Ovary (tissue), 10 donors: ENCODE measurements at regions of chrX and their contacts with region 1.

Region 1: GRCh38 chrX:41796577-41796976 is 72.6 kb downstream of the GPR82 start:
- DNase-seq: no peak
- H3K4me3 ChIP-seq: no peak overlapping the region
- H3K27ac ChIP-seq: no peak overlapping the region
- H3K4me1 ChIP-seq: no peaks in the 10 kb centered on the region
- H3K27me3 ChIP-seq: no peaks in the 10 kb centered on the region
- CTCF ChIP-seq: no peak
- EP300 ChIP-seq: no peak
- POLR2A ChIP-seq: no peak

Region 2: DNA sequence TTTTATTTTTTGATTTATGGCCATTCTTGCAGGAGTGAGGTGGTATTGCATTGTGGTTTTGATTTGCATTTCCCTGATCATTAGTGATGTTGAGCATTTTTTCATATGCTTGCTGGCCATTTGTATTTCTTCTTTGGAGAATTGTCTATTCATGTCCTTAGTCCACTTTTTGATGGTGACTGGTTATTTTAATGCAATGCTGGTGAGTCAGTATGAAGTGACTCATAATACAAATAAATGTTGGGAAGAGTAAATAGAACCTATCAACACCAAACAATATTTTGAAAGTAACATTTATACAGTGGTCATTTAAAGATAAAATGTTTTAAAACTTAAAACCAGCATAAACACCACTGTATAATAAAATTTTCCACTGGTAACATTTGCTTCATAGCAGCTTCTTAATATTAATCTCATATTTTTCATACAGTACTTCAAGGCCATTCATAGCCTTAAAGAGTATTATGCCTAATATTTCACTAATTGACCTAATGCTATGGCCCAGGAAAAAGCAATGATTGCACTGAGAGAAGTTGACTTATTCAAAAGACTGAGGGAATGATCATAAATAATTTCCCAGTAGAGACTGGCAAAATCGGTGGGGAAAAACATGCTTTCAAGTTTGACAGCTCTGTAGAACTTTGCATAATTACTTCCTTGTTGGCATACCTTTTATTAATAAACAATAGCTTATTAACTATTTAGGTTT is 92.9 kb after region 1 on chrX:
- intact Hi-C with region 1: no loop called
- DNase-seq: no peak
- H3K4me3 ChIP-seq: no peak overlapping the region
- H3K27ac ChIP-seq: no peak overlapping the region
- H3K4me1 ChIP-seq: no peaks in the 10 kb centered on the region
- H3K27me3 ChIP-seq: no peaks in the 10 kb centered on the region
- CTCF ChIP-seq: no peak
- EP300 ChIP-seq: no peak
- POLR2A ChIP-seq: no peak

Region 3: GRCh38 chrX:43540318-43540717 is 1743.7 kb after region 1 on chrX:
- intact Hi-C with region 1: loop called in 1 of 4 experiments (anchors 10 kb)
- DNase-seq: no peak
- H3K4me3 ChIP-seq: no peak overlapping the region
- H3K27ac ChIP-seq: no peak overlapping the region
- H3K4me1 ChIP-seq: no peaks in the 10 kb centered on the region
- H3K27me3 ChIP-seq: no peaks in the 10 kb centered on the region
- CTCF ChIP-seq: no peak
- EP300 ChIP-seq: no peak
- POLR2A ChIP-seq: no peak